CD4-positive, alpha-beta T cell (primary cell): ENCODE measurements at regions of chr1 and their contacts with region 1.

Region 1: GRCh38 chr1:116418091-116418830 is 45.2 kb downstream of the ATP1A1 start:
- DNase-seq: peak; percentile 79 to 93 (median 85)
- ATAC-seq: peak; percentile 96
- H3K4me3 ChIP-seq: peak overlapping the region; percentile 94
- H3K4me3 Mint-ChIP-seq: peak overlapping the region; percentile 90
- H3K27ac ChIP-seq: peak overlapping the region; percentile 72 to 78
- H3K27ac Mint-ChIP-seq: peak overlapping the region; percentile 97
- H3K4me1 ChIP-seq: peaks cover 22% of the 10 kb centered on the region
- H3K4me1 Mint-ChIP-seq: peaks cover 32% of the 10 kb centered on the region
- H3K27me3 ChIP-seq: no peaks in the 10 kb centered on the region
- H3K27me3 Mint-ChIP-seq: no peaks in the 10 kb centered on the region
- CTCF ChIP-seq: no peak

Region 2: DNA sequence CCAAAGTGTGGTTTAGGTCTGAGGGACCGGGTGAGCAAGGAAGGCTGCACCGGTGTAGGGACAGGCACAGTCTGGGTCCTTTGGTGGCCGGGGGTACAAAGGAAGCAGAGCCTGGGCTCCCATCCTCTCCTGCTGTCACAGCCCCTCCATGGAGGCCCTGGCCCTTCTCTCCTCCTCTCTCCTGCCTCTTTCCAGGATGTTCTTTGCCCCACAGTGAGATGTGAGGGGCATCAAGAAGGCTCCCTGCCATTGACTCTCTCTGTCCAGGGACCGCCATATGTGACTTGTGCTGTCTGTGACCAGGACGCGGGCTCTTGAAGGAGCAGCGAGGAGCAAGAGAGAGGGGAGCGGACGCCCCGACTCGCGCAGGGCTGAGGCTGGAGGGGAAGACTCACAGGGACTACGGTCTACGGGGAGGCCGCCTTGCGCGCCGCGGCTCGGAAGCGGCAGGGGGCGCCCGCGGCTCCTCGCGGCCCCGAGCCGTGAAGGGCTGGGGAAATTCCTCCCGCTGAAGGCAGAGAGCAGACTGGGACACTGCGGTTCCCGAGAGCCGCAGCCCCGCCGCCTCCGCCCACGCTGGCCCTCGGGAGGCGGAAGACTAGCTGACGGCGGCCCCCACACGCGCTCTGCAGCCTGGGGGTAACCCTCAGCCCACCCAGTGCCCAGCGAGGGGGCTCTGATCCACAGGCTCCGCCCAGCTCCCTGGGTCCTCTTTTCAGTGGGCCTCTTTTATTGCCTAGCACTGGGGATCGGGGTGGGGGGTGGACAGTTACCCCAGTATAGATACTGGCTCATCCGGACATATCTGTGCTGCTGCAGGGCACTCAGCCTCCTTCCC is 266.3 kb before region 1 on chr1:
- CTCF ChIA-PET with region 1: no interaction called
- POLR2A ChIA-PET with region 1: no interaction called
- intact Hi-C with region 1: loop called in 1 of 2 experiments (anchors 5 kb)
- DNase-seq: peak; percentile 51 to 93 (median 69)
- ATAC-seq: peak; percentile 89
- H3K4me3 ChIP-seq: peak overlapping the region; percentile 48
- H3K4me3 Mint-ChIP-seq: peak overlapping the region; percentile 81
- H3K27ac ChIP-seq: peak overlapping the region; percentile 45 to 69
- H3K27ac Mint-ChIP-seq: peak overlapping the region; percentile 91
- H3K4me1 ChIP-seq: peaks cover 22% of the 10 kb centered on the region
- H3K4me1 Mint-ChIP-seq: peaks cover 31% of the 10 kb centered on the region
- H3K27me3 ChIP-seq: no peaks in the 10 kb centered on the region
- H3K27me3 Mint-ChIP-seq: no peaks in the 10 kb centered on the region
- CTCF ChIP-seq: peak; percentile 86

Region 3: GRCh38 chr1:116325922-116326321 is 92.3 kb before region 1 on chr1:
- CTCF ChIA-PET with region 1: no interaction called
- POLR2A ChIA-PET with region 1: interaction called, 15 read pairs
- intact Hi-C with region 1: no loop called
- DNase-seq: peak; percentile 25 to 83 (median 53)
- ATAC-seq: peak; percentile 91
- H3K4me3 ChIP-seq: peak overlapping the region; percentile 22
- H3K4me3 Mint-ChIP-seq: peak overlapping the region; percentile 62
- H3K27ac ChIP-seq: peak overlapping the region; percentile 72 to 85
- H3K27ac Mint-ChIP-seq: peak overlapping the region; percentile 91
- H3K4me1 ChIP-seq: peaks cover 60% of the 10 kb centered on the region
- H3K4me1 Mint-ChIP-seq: peaks cover 98% of the 10 kb centered on the region
- H3K27me3 ChIP-seq: no peaks in the 10 kb centered on the region
- H3K27me3 Mint-ChIP-seq: no peaks in the 10 kb centered on the region
- CTCF ChIP-seq: no peak

Region 4: GRCh38 chr1:116397728-116398127 is 20.5 kb before region 1 on chr1:
- CTCF ChIA-PET with region 1: no interaction called
- POLR2A ChIA-PET with region 1: interaction called, 16 read pairs
- intact Hi-C with region 1: no loop called
- DNase-seq: no peak
- ATAC-seq: no peak
- H3K4me3 ChIP-seq: no peak overlapping the region
- H3K4me3 Mint-ChIP-seq: no peak overlapping the region
- H3K27ac ChIP-seq: no peak overlapping the region
- H3K27ac Mint-ChIP-seq: peak overlapping the region; percentile 56
- H3K4me1 ChIP-seq: peaks cover 8% of the 10 kb centered on the region
- H3K4me1 Mint-ChIP-seq: peaks cover 32% of the 10 kb centered on the region
- H3K27me3 ChIP-seq: no peaks in the 10 kb centered on the region
- H3K27me3 Mint-ChIP-seq: no peaks in the 10 kb centered on the region
- CTCF ChIP-seq: no peak

Region 5: DNA sequence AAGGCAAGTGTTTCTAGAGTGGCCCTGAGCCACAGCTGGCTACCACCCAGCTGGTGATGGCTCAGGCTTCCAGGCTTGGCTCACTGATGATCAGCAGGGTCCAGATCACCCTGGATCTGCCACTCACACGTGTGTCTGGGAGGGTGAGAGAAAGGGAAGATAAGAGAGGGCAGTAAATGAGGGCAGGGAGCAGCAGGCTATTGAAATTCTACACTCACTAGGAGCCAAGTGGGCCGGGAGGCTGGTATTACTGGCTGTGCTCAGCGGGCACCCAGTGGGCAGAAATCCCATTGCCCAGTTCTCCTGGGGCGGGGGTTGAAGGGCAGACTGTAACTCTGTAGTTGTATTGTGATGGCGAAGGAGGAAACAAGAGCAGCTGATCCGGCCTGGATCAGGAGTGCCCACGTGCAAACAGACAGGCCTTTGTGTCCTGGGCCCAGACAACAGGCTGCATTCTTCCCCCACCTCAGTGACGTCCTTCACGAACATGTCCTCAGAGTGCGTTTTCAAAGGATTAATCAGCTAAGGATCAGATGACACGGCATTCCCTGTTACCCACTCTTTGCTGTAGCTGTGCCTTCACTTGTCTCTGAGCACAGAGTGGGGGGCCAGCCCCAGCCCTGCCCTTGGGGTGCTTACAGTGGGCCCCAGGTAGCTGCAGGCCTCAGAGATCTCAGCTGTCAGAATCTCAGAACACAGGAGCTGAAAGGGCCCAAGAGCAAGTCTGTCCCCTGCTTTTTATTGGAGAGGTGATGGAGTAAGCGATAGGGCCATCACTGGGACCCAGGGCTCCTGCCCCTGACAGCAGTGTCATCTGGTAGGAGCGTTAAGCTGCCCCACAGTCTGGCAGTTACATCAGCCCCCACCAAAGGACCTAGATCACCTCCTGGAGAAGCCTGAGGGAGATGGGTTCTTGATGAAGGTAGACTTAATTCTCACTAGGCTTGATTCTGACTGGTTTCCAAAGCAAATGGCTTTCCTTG is 15.3 kb after region 1 on chr1:
- CTCF ChIA-PET with region 1: no interaction called
- POLR2A ChIA-PET with region 1: interaction called, 22 read pairs
- intact Hi-C with region 1: no loop called
- DNase-seq: no peak
- ATAC-seq: no peak
- H3K4me3 ChIP-seq: no peak overlapping the region
- H3K4me3 Mint-ChIP-seq: no peak overlapping the region
- H3K27ac ChIP-seq: no peak overlapping the region
- H3K27ac Mint-ChIP-seq: no peak overlapping the region
- H3K4me1 ChIP-seq: no peaks in the 10 kb centered on the region
- H3K4me1 Mint-ChIP-seq: no peaks in the 10 kb centered on the region
- H3K27me3 ChIP-seq: no peaks in the 10 kb centered on the region
- H3K27me3 Mint-ChIP-seq: no peaks in the 10 kb centered on the region
- CTCF ChIP-seq: no peak